ENCODE measurements at regions of chr1 and their contacts with region 1.

Region 1: GRCh38 chr1:108345787-108346517 is 102.1 kb upstream of the NBPF4 start:
- DNase-seq: no peak
- ATAC-seq: no peak
- H3K4me3 ChIP-seq: no peak overlapping the region
- H3K27ac ChIP-seq: no peak overlapping the region
- H3K4me1 ChIP-seq: no peaks in the 10 kb centered on the region
- H3K27me3 ChIP-seq: no peaks in the 10 kb centered on the region
- CTCF ChIP-seq: no peak
- POLR2A ChIP-seq: no peak
- RAD21 ChIP-seq: no peak

Region 2: DNA sequence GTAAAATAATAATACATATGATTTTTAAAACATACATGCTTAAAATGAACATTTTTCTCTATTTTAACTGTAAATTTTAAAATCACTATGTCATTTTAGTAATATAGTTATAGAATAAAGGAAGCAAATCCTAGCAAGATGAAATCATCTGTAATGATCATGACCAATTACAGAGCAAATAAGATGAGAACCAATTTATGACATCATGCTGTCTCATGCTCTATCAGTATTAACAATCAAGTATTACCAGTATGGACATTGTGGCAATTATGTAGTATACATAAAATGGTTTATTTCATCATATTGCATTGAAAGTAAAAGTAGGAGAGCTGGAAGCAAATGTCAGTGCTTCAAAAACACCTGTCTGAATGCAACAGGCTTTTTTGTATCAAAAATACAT is 635.9 kb before region 1 on chr1:
- CTCF ChIA-PET with region 1: no interaction called
- POLR2A ChIA-PET with region 1: no interaction called
- dilution Hi-C with region 1: no loop called
- in situ Hi-C with region 1: no loop called
- intact Hi-C with region 1: loop called (anchors 5 kb)
- DNase-seq: no peak
- ATAC-seq: no peak
- H3K4me3 ChIP-seq: no peak overlapping the region
- H3K27ac ChIP-seq: no peak overlapping the region
- H3K4me1 ChIP-seq: no peaks in the 10 kb centered on the region
- H3K27me3 ChIP-seq: no peaks in the 10 kb centered on the region
- CTCF ChIP-seq: no peak
- POLR2A ChIP-seq: no peak
- RAD21 ChIP-seq: no peak